Activated CD4-positive, alpha-beta T cell treated with anti-CD3 and anti-CD28 coated beads, Interleukin-2, amount 10 ng/mL, durations not matched to agents 24 days and 14 days (primary cell): ENCODE measurements at regions of chr6 and their contacts with region 1.

Region 1: DNA sequence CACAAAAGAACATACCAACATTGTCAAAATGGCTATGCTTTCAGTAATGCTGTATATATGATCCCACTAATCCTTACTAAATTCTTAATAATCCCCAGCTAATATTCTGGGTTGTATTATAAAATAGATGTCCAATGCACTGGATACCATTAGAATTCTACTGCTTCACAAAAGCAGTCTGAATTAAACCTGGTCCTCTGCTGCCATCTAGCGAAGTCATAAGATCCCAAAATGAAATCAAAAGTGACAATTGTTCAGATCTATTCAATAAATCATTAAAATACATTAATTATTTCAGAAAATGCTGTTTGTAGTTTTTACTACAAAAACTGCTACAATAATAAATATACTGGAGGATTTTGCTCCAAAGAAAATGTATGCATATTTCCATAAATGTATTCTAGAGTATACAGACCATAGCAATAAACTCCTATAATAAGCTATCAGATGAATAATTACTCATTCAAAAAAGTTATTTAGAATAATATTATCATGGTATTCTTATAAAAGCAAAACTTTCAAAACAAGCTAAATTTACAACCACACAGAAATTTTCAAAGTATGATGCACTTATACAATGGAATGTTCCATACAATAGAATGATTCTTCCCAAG is 92.6 kb downstream of the RNGTT start:
- DNase-seq: peak; percentile 85
- H3K4me3 Mint-ChIP-seq: no peak overlapping the region
- H3K27ac Mint-ChIP-seq: no peak overlapping the region
- H3K4me1 Mint-ChIP-seq: peaks cover 24% of the 10 kb centered on the region
- H3K27me3 Mint-ChIP-seq: no peaks in the 10 kb centered on the region

Region 2: GRCh38 chr6:87066449-87067333 is 1804.1 kb before region 1 on chr6:
- intact Hi-C with region 1: loop called (anchors 5 kb)
- DNase-seq: peak; percentile 76
- H3K4me3 Mint-ChIP-seq: peak overlapping the region; percentile 6
- H3K27ac Mint-ChIP-seq: no peak overlapping the region
- H3K4me1 Mint-ChIP-seq: no peaks in the 10 kb centered on the region
- H3K27me3 Mint-ChIP-seq: peaks cover 27% of the 10 kb centered on the region

Region 3: DNA sequence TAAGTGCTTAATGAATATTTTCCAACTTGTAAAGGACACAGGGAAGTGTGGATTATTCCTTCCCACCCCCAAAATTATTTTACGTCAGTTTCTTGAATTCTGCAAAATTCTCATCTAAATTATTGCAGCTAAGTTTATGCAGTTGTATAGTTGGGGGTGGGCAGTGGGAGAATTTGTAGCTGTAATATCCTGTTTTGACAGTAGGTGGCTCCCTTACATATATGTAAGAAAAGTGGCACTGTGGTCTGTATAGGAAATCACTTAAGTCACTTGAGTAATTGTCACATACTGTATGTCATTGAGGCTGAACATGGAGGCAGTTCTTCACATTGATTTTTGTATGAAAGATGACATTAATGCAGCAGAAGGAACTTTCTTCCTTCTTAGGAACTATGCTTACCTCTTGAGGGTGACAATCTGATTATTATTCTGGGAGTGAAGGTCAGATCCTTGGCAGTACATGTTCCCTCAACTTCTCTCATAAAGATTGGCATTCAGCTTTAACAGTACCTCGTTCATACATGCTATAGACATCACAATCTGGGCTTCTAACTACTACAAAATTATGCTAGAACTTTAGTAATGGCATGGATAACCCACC is 1477.7 kb before region 1 on chr6:
- intact Hi-C with region 1: loop called (anchors 5 kb)
- DNase-seq: peak; percentile 82
- H3K4me3 Mint-ChIP-seq: no peak overlapping the region
- H3K27ac Mint-ChIP-seq: no peak overlapping the region
- H3K4me1 Mint-ChIP-seq: no peaks in the 10 kb centered on the region
- H3K27me3 Mint-ChIP-seq: no peaks in the 10 kb centered on the region

Region 4: DNA sequence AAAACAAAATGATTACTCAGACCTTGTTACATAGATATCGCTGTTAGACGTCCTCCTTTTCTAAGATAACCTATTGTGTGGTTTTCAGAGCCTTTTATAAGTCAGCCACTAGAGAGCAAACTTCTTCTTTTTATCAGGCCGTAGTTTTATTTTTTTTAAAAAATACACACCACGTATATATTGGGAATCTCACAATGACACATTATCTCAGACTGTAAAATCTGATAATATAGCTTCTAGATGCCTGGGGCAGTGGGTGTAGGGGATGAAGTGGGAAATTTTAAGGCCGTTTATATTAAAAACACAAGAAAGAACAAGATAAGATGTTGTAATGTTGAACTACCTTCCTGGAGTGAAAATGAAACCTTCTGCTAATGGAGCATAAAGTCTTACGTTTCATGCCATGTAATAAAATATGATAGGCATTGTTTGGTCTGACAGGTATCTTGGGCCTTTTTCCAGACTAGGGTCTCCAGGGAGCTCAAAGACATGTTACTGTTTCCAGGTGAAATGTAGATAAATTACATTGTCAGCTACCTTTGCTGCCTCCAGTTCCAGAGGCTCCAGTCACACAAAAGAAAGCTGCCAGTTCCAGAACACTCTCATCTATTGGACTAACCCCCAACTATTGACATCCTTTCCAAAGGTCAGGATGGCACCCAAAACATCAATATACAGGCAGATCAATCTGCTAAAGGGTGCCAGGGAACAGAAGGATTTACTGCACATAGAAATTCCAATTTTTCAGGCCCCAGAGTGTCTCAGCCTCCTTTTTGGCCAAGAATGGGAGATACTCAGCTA is 1038.6 kb before region 1 on chr6:
- intact Hi-C with region 1: loop called (anchors 10 kb)
- DNase-seq: peak; percentile 61
- H3K4me3 Mint-ChIP-seq: peak overlapping the region; percentile 86
- H3K27ac Mint-ChIP-seq: peak overlapping the region; percentile 62
- H3K4me1 Mint-ChIP-seq: peaks cover 9% of the 10 kb centered on the region
- H3K27me3 Mint-ChIP-seq: peaks cover 2% of the 10 kb centered on the region

Region 5: GRCh38 chr6:87929843-87930288 is 941.0 kb before region 1 on chr6:
- intact Hi-C with region 1: loop called (anchors 1 kb)
- DNase-seq: peak; percentile 85
- H3K4me3 Mint-ChIP-seq: no peak overlapping the region
- H3K27ac Mint-ChIP-seq: no peak overlapping the region
- H3K4me1 Mint-ChIP-seq: no peaks in the 10 kb centered on the region
- H3K27me3 Mint-ChIP-seq: peaks cover 9% of the 10 kb centered on the region

Region 6: GRCh38 chr6:88780714-88781389 is 90.0 kb before region 1 on chr6:
- intact Hi-C with region 1: loop called (anchors 2 kb)
- DNase-seq: peak; percentile 85
- H3K4me3 Mint-ChIP-seq: no peak overlapping the region
- H3K27ac Mint-ChIP-seq: no peak overlapping the region
- H3K4me1 Mint-ChIP-seq: peaks cover 3% of the 10 kb centered on the region
- H3K27me3 Mint-ChIP-seq: no peaks in the 10 kb centered on the region